HepG2 (cell line): ENCODE measurements at regions of chr17 and their contacts with region 1.

Region 1: GRCh38 chr17:78365561-78366108 is 5.8 kb upstream of the SOCS3 start:
- DNase-seq: peak; percentile 68
- ATAC-seq: peak; percentile 49
- H3K4me3 ChIP-seq: peak overlapping the region in 2 of 3 experiments; percentile 1 to 49; a peak in 1 of 6 replicates
- H3K27ac ChIP-seq: no peak overlapping the region
- H3K4me1 ChIP-seq: peaks cover 38% of the 10 kb centered on the region
- H3K27me3 ChIP-seq: peaks cover 20 to 81% of the 10 kb centered on the region in 2 experiments
- CTCF ChIP-seq: no peak
- EP300 ChIP-seq: peak in 1 of 2 experiments; percentile 44; a peak in 2 of 4 replicates
- POLR2A ChIP-seq: no peak
- RAD21 ChIP-seq: no peak

Region 2: GRCh38 chr17:78397681-78398101 is 32.1 kb after region 1 on chr17:
- CTCF ChIA-PET with region 1: no interaction called
- POLR2A ChIA-PET with region 1: interaction called, 3 read pairs
- in situ Hi-C with region 1: no loop called
- intact Hi-C with region 1: loop called (anchors 2 kb)
- DNase-seq: no peak
- ATAC-seq: no peak
- H3K4me3 ChIP-seq: no peak overlapping the region
- H3K27ac ChIP-seq: no peak overlapping the region
- H3K4me1 ChIP-seq: peaks cover 53% of the 10 kb centered on the region
- H3K27me3 ChIP-seq: no peaks in the 10 kb centered on the region
- CTCF ChIP-seq: no peak
- EP300 ChIP-seq: no peak
- POLR2A ChIP-seq: no peak
- RAD21 ChIP-seq: no peak

Region 3: GRCh38 chr17:78526231-78527025 is 160.8 kb after region 1 on chr17:
- CTCF ChIA-PET with region 1: no interaction called
- POLR2A ChIA-PET with region 1: no interaction called
- in situ Hi-C with region 1: no loop called
- intact Hi-C with region 1: no loop called
- DNase-seq: no peak
- ATAC-seq: peak; percentile 70
- H3K4me3 ChIP-seq: no peak overlapping the region
- H3K27ac ChIP-seq: no peak overlapping the region
- H3K4me1 ChIP-seq: peaks cover 35% of the 10 kb centered on the region
- H3K27me3 ChIP-seq: no peaks in the 10 kb centered on the region; a peak in 1 of 5 replicates
- CTCF ChIP-seq: no peak
- EP300 ChIP-seq: no peak
- POLR2A ChIP-seq: no peak
- RAD21 ChIP-seq: no peak